Activated T-helper 1 cell treated with anti-CD3 and anti-CD28 coated beads, Interleukin-12 subunit alpha, Interleukin-12 subunit beta, Interleukin-2, Interleukin-4 antibody, amounts not matched to agents 30 ng/mL and 10 ng/mL and 1 ng/mL, durations not matched to agents 14 hours and 24 hours and 36 hours (primary cell): ENCODE measurements at regions of chr19 and their contacts with region 1.

Region 1: DNA sequence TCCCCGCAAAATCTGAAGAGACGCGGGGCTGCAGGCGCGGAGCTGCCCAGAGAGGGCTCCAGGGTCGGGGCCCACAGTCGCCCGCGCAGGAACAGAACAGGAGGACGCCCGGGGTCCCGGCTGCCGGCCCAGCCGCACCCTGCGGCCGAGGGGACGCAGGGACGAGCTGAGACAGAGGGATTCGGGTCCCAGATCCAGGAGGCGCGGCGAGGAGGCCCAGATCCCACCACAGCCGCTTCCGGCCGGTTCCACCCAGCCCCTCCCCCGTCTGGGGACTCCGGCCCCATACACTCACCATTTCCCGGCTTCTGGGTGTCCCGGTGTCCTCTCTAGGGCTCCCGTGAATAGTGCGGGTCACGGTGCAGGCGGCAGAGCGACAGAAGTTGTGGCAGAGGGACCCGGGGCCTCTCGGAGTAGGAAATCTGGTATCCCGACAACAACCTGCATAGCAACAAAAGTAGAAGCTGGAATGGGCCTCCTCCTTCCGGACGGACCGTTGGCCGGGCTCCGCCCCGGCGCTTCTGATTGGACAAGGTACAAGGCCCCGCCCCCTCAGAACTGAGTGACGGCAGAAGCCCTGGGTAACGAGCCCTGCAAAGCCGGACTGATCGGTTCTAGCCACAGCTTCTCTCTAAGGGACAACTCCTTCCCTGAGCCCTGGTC is at the start of gene ZNF20:
- DNase-seq: peak; percentile 86
- H3K4me3 Mint-ChIP-seq: peak within 1 kb of the TSS; percentile 93
- H3K27ac Mint-ChIP-seq: peak within 1 kb of the TSS; percentile 80
- H3K4me1 Mint-ChIP-seq: peaks cover 34% of the 10 kb centered on the region
- H3K27me3 Mint-ChIP-seq: no peaks in the 10 kb centered on the region
- total RNA-seq, gene ZNF20: 2.8 and 3.5 TPM in 2 replicates

Region 2: GRCh38 chr19:11798391-11799330 is 341.4 kb before region 1 on chr19 and contains the start of gene ZNF491:
- intact Hi-C with region 1: loop called (anchors 1 kb)
- DNase-seq: peak; percentile 63
- H3K4me3 Mint-ChIP-seq: peak within 1 kb of the TSS; percentile 78
- H3K27ac Mint-ChIP-seq: no peak within 1 kb of the TSS
- H3K4me1 Mint-ChIP-seq: peaks cover 14% of the 10 kb centered on the region
- H3K27me3 Mint-ChIP-seq: no peaks in the 10 kb centered on the region
- total RNA-seq, gene ZNF491: 0.54 and 0.56 TPM in 2 replicates

Region 3: GRCh38 chr19:11881151-11881800 is 258.7 kb before region 1 on chr19:
- intact Hi-C with region 1: loop called (anchors 1 kb)
- DNase-seq: peak; percentile 43
- H3K4me3 Mint-ChIP-seq: no peak overlapping the region
- H3K27ac Mint-ChIP-seq: no peak overlapping the region
- H3K4me1 Mint-ChIP-seq: peaks cover 4% of the 10 kb centered on the region
- H3K27me3 Mint-ChIP-seq: no peaks in the 10 kb centered on the region

Region 4: DNA sequence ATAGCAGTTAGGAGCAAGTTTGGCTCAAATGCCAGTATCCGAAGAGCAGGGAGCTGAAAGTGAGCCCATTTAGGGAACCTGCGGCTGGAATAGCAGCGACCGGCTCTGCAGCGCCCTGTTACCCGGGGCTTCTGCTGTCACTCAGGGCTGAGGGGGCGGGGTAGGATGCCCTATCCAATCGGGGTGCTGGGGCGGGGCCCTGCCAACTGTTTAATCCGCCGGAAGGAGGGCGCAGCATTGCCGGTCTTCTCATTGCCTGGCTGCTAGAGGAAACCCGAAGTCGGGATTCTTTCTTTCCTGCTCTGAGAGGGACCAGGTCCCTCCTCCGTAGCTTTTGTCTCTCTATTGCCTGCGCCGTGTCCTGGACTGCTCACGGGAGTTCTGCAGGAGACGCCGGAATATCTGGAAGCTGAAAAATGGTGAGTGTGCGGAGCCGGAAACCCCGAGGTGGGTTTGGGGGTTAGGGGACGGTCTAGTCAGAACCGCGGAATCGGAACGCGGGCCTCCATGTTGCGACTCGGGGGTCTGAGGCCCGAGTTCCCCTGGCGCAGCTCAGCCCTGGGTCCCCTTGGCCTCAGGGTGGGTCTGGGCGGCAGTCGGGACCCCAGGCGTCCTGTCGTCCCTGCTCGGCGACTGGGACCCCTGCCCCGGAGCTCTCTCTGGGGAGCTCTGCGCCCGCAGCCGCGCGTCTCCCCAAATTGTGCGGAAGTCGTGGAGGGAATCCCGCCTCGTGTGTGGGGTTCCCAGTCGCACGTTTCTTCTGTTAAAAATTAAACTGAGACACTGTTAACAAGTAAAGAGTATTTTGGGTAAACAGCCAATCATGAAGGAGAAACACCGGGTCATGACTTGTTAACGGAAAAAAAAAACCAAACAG is 152.4 kb before region 1 on chr19:
- intact Hi-C with region 1: loop called (anchors 1 kb)
- DNase-seq: peak; percentile 81
- H3K4me3 Mint-ChIP-seq: peak overlapping the region; percentile 98
- H3K27ac Mint-ChIP-seq: peak overlapping the region; percentile 94
- H3K4me1 Mint-ChIP-seq: peaks cover 20% of the 10 kb centered on the region
- H3K27me3 Mint-ChIP-seq: no peaks in the 10 kb centered on the region

Region 5: GRCh38 chr19:12092065-12092867 is 47.8 kb before region 1 on chr19:
- intact Hi-C with region 1: loop called (anchors 1 kb)
- DNase-seq: peak; percentile 41
- H3K4me3 Mint-ChIP-seq: peak overlapping the region; percentile 81
- H3K27ac Mint-ChIP-seq: peak overlapping the region; percentile 76
- H3K4me1 Mint-ChIP-seq: no peaks in the 10 kb centered on the region
- H3K27me3 Mint-ChIP-seq: no peaks in the 10 kb centered on the region

Region 6: DNA sequence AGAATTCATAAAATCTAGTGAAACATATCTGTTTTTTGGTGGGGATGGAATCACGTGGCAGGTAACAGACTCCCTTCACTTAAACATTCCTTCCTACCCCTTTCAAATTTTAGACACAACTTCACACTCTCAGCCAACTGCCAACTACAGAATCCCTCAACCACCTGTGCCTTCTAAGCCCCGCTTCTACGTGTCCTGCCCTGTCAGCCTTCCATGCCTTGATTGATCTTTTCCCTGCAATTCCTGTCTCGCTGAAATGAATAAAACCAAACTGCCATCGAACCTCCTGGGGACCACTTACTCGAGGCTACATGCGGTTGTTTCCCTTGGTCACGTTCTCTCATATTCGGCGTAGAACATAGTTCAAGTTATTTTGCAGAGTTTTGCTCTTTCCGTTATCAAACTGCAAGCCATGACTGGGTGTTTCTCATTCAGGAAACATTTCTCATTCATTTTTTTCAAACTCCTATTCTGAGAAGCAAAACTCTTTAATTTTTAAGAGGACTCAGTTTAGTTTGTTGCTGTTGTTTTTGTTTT is 15.4 kb after region 1 on chr19:
- intact Hi-C with region 1: no loop called
- DNase-seq: no peak
- H3K4me3 Mint-ChIP-seq: peak overlapping the region; percentile 50
- H3K27ac Mint-ChIP-seq: no peak overlapping the region
- H3K4me1 Mint-ChIP-seq: peaks cover 10% of the 10 kb centered on the region
- H3K27me3 Mint-ChIP-seq: peaks cover 4% of the 10 kb centered on the region

Region 7: DNA sequence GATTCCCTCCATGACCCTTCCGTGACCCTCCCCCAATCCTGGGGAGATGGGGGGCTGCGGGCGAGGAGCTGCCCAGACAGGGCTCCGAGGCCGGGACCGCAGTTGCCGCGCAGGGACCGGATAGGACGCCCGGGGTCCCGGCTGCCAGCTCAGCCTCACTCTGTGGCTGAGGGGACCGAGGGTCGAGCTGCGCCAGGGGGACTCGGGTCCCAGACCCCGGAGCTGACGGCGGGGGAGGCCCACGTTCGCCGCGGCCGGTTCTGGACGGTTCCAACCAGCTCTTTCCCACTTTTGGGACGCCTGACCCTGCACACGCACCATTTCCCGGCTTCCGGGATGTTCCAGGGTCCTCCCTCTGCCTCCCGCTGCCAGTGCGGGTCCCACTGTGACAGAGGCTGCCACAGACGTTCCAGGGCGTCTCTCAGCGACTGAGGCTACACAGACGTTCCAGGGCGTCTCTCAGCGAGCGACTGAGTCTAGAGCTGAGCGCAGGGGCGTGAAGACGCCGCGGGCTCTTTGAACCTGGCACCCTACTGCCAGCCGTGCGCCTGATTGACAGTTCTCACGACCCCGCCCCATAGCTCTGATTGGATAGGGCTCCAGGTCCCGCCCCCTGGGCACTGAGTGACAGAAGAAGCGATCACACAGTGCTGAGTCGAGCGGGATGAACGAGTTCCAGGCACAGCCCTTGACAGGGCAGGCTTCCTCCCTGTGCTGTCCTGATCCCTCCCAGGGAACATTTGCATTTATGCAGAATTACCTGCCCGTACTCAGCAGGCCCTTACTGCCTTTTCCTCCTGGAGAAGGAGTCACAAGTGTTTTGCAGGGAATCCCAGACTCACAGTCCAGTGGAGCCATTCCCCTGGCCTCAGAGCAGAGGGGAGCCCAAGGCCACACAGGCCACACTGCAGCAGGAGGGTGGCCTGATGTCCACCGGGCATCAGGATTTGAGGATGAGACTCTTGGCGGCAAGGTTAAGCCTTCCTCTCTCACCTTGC is 193.4 kb after region 1 on chr19 and contains the start of gene ZNF563:
- intact Hi-C with region 1: loop called (anchors 1 kb)
- DNase-seq: peak; percentile 96
- H3K4me3 Mint-ChIP-seq: peak within 1 kb of the TSS; percentile 96
- H3K27ac Mint-ChIP-seq: peak within 1 kb of the TSS; percentile 96
- H3K4me1 Mint-ChIP-seq: peaks cover 38% of the 10 kb centered on the region
- H3K27me3 Mint-ChIP-seq: no peaks in the 10 kb centered on the region
- total RNA-seq, gene ZNF563: 1.4 and 2.5 TPM in 2 replicates